Caco-2 (cell line): ENCODE measurements at regions of chr3 and their contacts with region 1.

Region 1: DNA sequence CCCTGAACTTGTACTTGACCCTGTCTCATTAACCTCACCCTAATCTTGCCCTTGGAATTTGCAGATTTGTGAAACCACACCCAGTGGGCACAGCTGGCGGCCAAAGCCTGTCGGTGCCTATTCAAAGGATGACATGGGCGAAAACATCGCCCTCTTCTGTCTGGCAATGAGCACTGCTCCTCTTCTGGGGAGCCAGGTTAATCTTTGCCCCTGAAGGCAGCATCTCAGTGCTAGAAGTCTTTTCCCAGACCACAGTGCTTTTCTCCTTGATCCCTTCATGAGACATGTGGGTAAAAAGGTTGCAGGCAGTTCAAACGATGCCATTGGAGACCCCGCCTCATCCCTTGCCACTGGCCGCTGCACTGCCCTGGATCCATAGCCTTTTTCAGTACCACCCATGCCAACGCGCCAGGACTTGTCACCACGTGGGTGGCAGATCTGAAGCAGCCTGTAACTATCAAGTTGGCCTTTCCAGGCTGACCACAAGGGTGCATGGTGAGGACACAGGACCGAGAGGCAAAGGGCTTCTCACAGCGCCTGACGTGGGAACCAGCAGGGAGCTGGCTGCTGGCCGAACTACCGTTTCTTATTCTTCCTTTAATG is 6.5 kb upstream of the DNASE1L3 start:
- DNase-seq: peak; percentile 69 to 73
- H3K4me3 ChIP-seq: no peak overlapping the region
- H3K4me3 Mint-ChIP-seq: no peak overlapping the region
- H3K27ac Mint-ChIP-seq: no peak overlapping the region
- H3K4me1 ChIP-seq: peaks cover 25% of the 10 kb centered on the region
- H3K4me1 Mint-ChIP-seq: peaks cover 27% of the 10 kb centered on the region
- H3K27me3 ChIP-seq: no peaks in the 10 kb centered on the region
- H3K27me3 Mint-ChIP-seq: no peaks in the 10 kb centered on the region
- CTCF ChIP-seq: peak; percentile 61 to 75

Region 2: DNA sequence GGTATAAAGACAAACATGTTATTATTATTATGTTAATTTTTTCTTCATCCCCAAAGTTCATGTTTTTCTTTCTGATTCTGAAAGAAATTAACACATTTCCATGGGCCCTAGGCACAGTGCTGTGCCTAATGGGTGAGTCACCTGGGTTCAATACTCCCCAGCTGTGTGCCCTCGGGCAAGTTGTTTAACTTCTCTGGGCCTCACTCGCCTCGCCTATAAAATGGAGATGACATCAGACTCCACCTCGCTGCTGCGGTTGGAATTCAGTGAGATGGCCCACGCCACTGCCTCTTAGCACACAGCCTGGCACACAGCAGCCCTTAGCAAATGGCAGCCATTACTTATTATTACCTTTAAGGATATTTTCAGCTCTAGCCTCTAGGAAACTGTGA is 29.1 kb before region 1 on chr3:
- CTCF ChIA-PET with region 1: interaction called, 21 read pairs
- POLR2A ChIA-PET with region 1: no interaction called
- intact Hi-C with region 1: loop called (anchors 1 kb)
- DNase-seq: no peak
- H3K4me3 ChIP-seq: no peak overlapping the region
- H3K4me3 Mint-ChIP-seq: no peak overlapping the region
- H3K27ac Mint-ChIP-seq: no peak overlapping the region
- H3K4me1 ChIP-seq: peaks cover 8% of the 10 kb centered on the region
- H3K4me1 Mint-ChIP-seq: peaks cover 11% of the 10 kb centered on the region
- H3K27me3 ChIP-seq: no peaks in the 10 kb centered on the region
- H3K27me3 Mint-ChIP-seq: no peaks in the 10 kb centered on the region
- CTCF ChIP-seq: no peak

Region 3: GRCh38 chr3:58193682-58194407 is 23.5 kb before region 1 on chr3:
- CTCF ChIA-PET with region 1: interaction called, 21 read pairs
- POLR2A ChIA-PET with region 1: no interaction called
- intact Hi-C with region 1: loop called (anchors 1 kb)
- DNase-seq: no peak
- H3K4me3 ChIP-seq: no peak overlapping the region
- H3K4me3 Mint-ChIP-seq: no peak overlapping the region
- H3K27ac Mint-ChIP-seq: no peak overlapping the region
- H3K4me1 ChIP-seq: peaks cover 11% of the 10 kb centered on the region
- H3K4me1 Mint-ChIP-seq: peaks cover 16% of the 10 kb centered on the region
- H3K27me3 ChIP-seq: no peaks in the 10 kb centered on the region
- H3K27me3 Mint-ChIP-seq: no peaks in the 10 kb centered on the region
- CTCF ChIP-seq: no peak

Region 4: DNA sequence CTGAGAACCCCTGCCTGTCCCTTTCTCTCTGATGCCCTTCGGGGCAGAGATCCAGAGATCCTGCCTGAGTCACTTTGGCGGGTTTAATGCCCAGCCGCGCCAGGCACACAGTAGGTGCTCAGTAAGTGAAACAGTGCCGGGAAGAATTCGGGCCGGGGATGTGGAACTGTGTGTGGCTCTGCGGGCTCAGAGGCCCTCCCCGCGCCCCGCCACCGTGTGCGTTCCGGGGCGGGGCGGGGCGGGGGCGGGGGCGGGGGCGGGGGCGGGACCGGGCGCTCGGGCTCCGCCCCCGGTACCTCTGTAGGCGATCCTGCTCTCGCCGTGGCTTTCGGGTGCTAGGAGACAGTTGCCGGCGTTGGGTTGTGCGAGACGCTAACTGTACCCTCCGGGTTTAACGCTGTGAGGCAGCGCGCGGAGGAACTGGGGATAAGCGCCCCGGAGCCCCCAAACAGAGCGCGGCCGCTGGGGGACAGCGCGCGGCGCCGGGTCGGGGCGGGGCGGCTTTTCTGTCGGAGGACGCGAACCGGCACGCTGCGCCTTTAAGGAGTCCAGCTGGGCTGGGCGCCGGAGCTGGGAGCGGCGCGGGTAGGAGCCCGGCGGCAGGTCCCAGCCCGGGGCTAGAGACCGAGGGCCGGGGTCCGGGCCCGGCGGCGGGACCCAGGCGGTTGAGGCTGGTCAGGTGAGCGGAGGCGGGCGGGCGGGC is 20.1 kb after region 1 on chr3 and contains the start of gene ABHD6:
- CTCF ChIA-PET with region 1: interaction called, 3 read pairs
- POLR2A ChIA-PET with region 1: no interaction called
- intact Hi-C with region 1: loop called (anchors 1 kb)
- DNase-seq: peak; percentile 72 to 90
- H3K4me3 ChIP-seq: peak within 1 kb of the TSS; percentile 75
- H3K4me3 Mint-ChIP-seq: peak within 1 kb of the TSS; percentile 98
- H3K27ac Mint-ChIP-seq: peak within 1 kb of the TSS; percentile 56
- H3K4me1 ChIP-seq: peaks cover 10% of the 10 kb centered on the region
- H3K4me1 Mint-ChIP-seq: peaks cover 6% of the 10 kb centered on the region
- H3K27me3 ChIP-seq: no peaks in the 10 kb centered on the region
- H3K27me3 Mint-ChIP-seq: no peaks in the 10 kb centered on the region
- CTCF ChIP-seq: peak in 1 of 2 experiments; percentile 22
- total RNA-seq, gene ABHD6: 15.4 and 16.1 TPM in 2 replicates

Region 5: GRCh38 chr3:58299839-58300516 is 82.7 kb after region 1 on chr3:
- CTCF ChIA-PET with region 1: interaction called, 4 read pairs
- POLR2A ChIA-PET with region 1: no interaction called
- intact Hi-C with region 1: loop called (anchors 1 kb)
- DNase-seq: peak in 1 of 2 experiments; percentile 17
- H3K4me3 ChIP-seq: no peak overlapping the region
- H3K4me3 Mint-ChIP-seq: no peak overlapping the region
- H3K27ac Mint-ChIP-seq: no peak overlapping the region
- H3K4me1 ChIP-seq: no peaks in the 10 kb centered on the region
- H3K4me1 Mint-ChIP-seq: no peaks in the 10 kb centered on the region
- H3K27me3 ChIP-seq: no peaks in the 10 kb centered on the region
- H3K27me3 Mint-ChIP-seq: no peaks in the 10 kb centered on the region
- CTCF ChIP-seq: peak; percentile 30 to 69